PC-3 (cell line): ENCODE measurements at regions of chr2 and their contacts with region 1.

Region 1: DNA sequence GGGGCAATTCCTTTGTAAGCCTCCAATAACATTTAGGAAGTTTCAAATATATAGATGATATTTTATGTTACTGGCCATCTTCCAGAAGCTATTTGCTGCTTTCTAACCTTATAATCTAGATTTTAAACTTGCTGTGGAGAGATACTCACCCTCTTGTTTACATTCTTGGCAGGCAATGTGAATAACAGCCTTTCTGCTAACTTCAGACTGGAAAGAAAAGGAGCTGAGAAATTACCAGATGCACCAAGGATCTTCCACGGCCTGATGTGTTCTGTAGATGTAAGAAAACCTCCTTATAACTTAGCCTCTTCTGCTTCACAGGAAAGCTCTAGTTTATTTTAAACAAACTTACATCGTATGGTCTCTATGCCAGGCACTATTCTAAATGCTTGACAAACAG is 16.7 kb downstream of the REG1B start:
- DNase-seq: no peak
- ATAC-seq: no peak
- H3K4me3 ChIP-seq: no peak overlapping the region
- H3K27ac ChIP-seq: no peak overlapping the region
- H3K4me1 ChIP-seq: no peaks in the 10 kb centered on the region
- H3K27me3 ChIP-seq: no peaks in the 10 kb centered on the region
- CTCF ChIP-seq: no peak

Region 2: DNA sequence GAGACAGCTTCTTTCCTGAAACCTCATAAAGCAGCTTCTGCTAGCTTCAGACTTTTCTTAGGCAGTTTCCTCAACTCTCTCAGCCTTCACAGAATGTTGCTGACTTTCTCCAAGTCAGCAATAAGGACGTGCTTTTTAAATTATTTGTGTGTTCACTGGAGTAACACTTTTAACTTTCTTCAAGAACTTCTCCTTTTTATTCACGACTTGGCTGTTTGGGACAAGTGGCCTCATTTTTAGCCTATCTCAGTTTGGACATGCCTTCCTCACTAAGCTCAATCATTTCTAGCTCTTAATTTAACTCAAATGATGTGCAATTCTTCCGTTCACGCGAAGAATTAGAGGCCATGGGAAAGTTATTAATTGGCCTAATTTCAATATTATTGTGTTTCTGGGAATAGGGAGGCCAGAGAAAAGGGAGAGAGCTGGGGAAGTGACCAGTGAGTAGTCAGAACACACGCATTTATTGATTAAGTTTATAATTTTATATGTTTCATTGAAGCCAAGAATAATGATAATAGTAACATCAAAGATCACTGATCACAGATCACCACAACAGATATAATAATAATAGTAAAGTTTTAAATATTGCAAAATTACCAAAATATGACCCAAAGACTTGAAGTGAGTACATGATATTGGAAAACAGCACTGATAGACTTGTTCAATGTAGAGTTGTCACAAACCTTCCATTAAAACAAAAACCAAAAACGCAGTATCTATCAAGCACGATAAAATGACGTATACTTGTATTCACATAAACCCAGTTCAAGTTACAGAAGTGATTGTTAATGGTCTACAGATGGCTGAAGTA is 54.0 kb after region 1 on chr2:
- CTCF ChIA-PET with region 1: no interaction called
- POLR2A ChIA-PET with region 1: no interaction called
- intact Hi-C with region 1: loop called (anchors 2 kb)
- DNase-seq: no peak
- ATAC-seq: no peak
- H3K4me3 ChIP-seq: no peak overlapping the region
- H3K27ac ChIP-seq: no peak overlapping the region
- H3K4me1 ChIP-seq: no peaks in the 10 kb centered on the region
- H3K27me3 ChIP-seq: no peaks in the 10 kb centered on the region
- CTCF ChIP-seq: no peak

Region 3: DNA sequence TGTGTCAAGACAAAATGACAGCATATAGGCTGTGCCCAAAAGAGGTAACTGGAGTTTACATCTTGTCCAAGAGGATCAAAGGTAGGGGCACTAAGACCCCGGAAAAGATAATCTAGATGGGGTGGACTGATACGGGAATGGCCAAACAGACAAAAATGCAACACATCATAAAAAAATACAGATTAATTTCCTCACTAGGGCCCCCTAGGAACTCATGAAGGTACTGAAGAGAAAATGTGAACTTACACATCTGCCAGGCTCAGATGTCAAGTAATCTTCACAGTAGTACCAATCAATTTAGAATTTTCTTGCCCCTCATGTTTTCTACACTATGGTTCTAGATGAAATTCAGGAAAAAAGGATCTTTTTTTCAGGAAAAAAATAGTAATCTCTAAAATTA is 204.1 kb after region 1 on chr2:
- CTCF ChIA-PET with region 1: no interaction called
- POLR2A ChIA-PET with region 1: no interaction called
- intact Hi-C with region 1: no loop called
- DNase-seq: no peak
- ATAC-seq: no peak
- H3K4me3 ChIP-seq: no peak overlapping the region
- H3K27ac ChIP-seq: no peak overlapping the region
- H3K4me1 ChIP-seq: no peaks in the 10 kb centered on the region
- H3K27me3 ChIP-seq: no peaks in the 10 kb centered on the region
- CTCF ChIP-seq: no peak